ENCODE measurements at regions of chr15 and their contacts with region 1.

Region 1: DNA sequence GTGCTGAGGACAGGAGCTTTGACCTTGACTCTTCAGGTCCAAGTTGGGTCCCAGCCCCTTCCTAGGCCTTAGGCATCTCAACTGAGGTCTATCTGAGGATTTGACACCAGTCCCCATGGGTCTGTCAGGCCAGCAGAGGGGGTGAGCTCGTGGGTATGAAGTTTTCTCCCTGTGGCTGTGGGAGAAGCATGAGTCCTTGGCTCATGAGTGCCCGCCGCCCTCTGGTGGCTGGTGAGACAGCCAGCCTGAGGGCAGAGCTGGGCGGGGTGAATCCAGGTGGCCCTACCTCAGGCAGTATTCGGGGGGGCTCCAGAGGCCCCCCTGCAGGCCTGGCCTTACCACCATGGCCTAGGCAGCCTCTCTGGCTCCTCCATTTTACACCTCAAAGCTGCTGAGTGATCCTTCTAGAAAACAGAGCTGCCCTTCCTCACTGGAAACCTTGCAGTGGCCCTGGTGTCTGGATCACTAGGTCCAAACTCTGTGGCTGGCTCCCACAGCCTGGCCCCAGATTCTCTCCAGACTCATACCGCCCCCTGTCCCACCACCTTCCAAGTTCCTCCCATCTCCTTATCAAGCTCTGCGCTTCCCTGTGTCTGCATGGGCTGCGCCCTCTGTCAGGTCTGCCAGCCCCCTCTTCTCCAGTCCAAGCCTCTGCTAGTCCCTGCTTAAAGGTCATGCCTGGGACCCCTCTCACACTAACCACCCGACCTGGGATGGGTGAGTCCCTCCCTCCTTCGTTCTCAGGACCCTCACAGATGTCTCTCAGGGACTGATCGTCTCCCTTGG is 16.1 kb downstream of the SH2D7 start:
- DNase-seq: peak; percentile 85
- CTCF ChIP-seq: peak; percentile 94

Region 2: DNA sequence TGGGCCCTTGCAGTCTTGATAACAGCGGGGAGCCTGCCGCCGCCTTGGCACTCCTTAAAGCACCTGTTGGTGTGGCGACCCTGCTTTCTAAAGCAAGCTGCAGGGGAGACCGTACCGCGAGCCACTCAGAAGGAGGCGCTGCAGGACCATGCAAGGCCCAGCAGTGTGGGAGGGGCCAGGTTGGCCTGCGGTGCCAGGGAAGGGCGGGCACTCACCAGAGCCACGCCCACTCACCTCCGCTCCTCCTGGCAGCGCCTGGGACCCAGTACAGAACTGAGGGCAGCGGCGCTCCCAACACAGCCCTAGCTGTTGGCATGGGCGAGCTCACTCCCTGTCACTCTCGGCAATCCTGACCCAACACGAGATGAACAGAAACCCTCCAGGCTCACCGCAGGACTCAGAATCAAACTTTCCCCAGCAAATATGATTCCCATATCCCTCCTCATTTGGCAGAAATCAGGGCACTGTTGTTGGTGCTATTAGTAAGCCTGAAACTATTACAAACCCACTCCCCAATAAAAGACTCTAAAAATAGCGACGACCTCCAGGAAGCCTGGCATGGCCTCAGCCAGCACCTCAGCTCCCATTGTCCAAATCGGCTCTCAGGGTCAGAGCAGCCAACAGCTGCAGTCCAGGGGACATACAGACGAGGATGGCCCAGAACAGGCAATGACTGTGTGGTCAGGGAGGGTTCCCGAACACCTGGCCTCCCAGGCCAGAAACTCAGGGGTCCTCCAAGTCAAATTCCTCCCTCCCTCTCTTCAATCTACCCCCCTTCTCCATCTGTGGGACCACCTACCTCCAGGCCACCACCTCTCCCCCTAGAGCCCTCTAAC is 108.2 kb before region 1 on chr15:
- CTCF ChIA-PET with region 1: interaction called, 97 read pairs
- POLR2A ChIA-PET with region 1: no interaction called
- DNase-seq: peak; percentile 77
- CTCF ChIP-seq: peak; percentile 67

Region 3: DNA sequence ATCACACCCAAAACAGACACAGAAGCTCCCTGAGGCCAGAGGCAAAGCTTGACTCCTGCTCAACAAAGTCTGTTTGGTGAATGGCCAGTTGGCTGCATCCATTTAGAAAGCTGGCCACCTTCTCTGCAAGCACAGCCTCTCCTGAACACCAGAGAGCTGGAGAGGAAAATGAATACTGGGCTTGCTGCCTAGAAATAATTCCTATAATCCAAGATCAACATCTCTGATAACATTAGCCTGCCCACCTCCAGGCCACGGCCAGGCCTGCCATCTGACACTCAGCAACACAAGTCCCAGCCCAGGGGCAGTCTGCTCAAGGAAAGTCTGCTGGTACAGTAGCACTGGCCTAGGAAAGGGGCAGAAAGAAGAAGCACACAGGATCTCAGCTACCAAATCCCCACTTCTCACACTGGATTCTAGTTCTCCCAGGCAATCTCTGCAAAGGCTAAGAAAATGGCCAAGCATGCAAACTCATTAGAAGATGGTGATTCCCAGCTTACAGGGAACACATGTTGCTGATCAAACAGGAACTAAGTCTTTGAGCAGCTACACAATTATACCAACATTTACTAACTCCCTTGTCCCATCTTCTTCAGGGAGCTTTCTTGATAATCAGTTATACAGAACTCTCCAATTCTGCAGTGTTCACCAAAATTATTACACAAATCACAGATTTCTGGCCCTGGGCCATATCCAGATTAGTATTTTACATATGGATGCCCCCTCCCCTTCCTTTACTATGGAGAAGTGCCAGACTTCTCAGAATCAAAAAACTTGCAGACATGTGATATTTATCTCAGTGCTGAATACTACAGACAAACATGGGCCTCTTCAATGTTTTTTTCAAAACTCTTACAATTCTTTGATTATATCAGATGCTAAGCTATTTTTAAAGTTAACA is 40.9 kb before region 1 on chr15:
- CTCF ChIA-PET with region 1: interaction called, 14 read pairs
- POLR2A ChIA-PET with region 1: no interaction called
- DNase-seq: no peak
- CTCF ChIP-seq: no peak

Region 4: DNA sequence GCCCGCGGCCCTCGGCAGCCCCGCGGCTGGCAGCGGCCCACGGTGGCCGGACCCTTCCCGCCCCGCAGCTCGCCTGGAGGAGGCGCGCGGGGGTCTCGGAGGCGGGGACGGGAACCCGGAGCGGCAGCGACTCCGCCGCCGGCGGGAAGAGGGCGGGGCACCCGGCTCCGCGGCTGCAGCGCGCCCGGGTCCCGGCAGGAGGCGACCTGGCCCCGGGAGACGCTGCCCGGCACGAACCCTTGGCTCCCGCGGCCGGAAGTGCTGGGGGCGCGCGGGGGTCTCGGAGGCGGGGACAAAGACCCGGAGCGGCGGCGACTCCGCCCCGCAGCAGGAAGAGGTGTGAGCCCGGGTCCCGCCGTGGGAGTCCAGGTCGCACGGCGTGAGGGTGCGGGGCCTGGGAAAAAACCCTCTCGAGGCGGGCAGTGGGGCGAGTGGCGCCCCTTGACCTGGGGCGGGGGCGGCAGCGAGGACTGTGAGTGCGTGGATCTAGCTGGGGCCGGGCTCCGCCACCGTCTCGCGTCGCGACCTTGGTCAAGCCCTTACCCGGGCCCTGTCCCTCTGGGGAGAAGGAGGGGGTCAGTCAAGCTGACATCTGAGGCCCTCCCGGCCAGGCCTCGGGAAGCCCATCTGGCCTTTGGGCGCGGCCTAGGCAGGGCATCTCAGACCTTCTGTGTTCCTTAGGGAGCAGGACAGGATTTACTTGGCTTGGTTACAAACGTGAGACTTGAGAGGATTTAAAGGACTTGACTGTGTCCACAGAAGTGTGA is 23.0 kb after region 1 on chr15 and contains the start of gene CIB2:
- CTCF ChIA-PET with region 1: interaction called, 27 read pairs
- POLR2A ChIA-PET with region 1: no interaction called
- DNase-seq: peak; percentile 94
- CTCF ChIP-seq: peak; percentile 84

Region 5: GRCh38 chr15:78204351-78205309 is 96.1 kb after region 1 on chr15:
- CTCF ChIA-PET with region 1: interaction called, 10 read pairs
- POLR2A ChIA-PET with region 1: no interaction called
- DNase-seq: no peak
- CTCF ChIP-seq: no peak

Region 6: GRCh38 chr15:78437762-78438302 is 329.3 kb after region 1 on chr15 and contains the start of gene IREB2:
- CTCF ChIA-PET with region 1: no interaction called
- POLR2A ChIA-PET with region 1: no interaction called
- DNase-seq: peak; percentile 99
- CTCF ChIP-seq: no peak

Region 7: DNA sequence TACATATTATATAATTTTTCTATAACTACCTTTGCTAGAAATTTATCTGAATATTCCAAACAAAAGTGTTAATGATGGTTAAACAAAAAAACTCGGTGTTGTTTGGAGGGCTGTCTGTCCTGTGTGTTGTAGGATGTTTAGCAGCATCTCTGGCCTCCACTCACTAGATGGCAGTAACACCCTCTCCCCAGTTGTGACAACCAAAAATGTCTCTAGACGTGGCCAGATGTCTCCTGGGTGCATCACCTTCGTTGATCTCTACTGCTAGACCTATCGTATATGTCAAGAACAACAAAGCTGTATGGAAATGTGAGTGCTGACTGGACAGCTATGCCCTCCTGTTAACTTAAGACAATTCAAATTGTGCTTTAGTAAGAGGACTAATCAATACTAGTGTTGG is 1188.1 kb after region 1 on chr15:
- CTCF ChIA-PET with region 1: no interaction called
- POLR2A ChIA-PET with region 1: no interaction called
- DNase-seq: no peak
- CTCF ChIP-seq: no peak